Cardiac septum (tissue), 1 donor: ENCODE measurements at regions of chr22 and their contacts with region 1.

Region 1: DNA sequence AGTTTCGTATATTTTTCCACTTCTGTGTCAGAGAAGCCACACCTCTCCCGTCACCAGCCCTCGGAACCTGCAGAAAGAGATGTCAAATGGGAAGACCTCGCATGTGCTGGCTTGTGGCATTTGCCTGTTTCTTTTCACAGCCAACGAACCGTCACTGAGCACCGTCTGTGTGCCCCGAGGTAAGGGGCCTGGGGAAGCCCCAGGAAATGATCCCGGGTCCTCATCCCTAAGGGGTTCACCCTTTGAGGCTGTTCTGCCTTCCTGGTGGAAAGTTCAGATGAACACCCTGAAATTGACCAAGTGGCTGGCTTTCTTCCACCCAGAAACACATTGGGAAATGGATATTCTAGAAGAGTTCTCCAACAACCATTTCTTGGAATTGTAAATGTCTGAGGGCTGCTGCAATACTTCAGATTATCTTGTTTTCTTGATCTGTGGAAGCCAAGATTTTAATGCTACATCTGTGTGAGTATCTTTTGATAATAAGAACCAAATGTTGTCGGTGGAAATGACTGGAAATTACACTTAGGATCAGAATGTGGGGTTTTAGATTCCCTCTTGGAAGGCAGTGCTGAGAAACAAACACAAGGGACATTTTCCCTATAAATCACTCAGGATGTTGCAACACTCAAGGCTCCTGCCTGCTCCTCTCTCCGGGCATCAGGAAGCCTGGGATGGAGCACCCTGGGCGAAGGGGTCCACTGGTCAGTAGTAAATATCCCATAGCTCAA is 37.6 kb downstream of the RIBC2 start:
- DNase-seq: no peak

Region 2: DNA sequence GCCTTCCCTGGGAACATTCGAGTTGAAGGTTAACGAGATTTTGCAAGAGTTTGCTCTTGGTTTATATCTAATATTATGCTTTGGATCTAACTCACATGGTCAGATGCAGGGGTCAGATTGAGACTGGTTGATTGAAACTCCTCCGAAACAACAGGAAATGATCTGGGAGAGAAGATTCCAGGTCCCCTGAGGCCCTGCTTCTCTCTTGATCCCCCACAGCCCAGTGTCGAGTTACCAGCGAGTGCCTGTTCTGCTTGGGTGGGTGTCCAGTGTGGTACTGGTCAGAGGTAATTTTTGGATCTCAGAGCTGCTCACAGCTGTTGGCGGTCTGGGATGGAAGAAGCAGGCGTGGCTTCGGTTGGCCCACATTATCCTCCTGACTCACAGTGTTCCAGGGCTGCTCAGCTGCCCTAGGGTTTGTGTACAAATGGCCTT is 60.8 kb after region 1 on chr22:
- intact Hi-C with region 1: loop called (anchors 5 kb)
- DNase-seq: peak; percentile 83